Mammary epithelial cell (primary cell): ENCODE measurements at regions of chr7 and their contacts with region 1.

Region 1: DNA sequence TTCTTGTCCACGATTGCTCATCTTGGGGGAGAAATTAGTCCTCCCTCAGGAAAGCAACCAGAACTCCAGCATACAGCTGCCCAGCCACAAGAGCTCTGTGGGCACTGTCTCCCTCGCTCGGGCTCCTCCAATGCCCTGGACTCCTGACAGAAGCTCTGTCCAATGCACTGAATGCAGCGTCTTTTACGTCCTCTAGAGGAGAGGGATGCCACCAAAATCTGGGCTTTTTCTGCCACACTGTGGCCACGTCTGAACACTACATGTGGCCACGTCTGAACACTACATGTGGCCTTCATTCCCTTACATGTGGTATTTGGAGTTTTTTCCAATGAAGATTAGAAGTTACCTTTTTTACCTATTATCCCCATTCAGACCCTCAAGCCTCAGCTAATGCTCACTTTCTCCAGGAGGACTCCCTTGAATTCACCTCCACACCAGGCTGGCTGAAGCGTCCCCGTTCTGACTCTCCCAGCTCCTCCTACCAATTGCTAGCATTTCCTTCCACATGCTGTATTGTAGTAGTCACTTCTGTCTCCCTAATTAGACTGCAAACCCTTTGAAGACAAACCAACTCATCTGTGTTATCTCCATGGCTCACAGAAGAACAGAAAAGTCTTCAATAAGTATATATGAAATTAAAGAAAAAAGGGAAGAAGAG is 134.3 kb upstream of the PDE1C start:
- DNase-seq: peak; percentile 85
- H3K4me3 ChIP-seq: peak overlapping the region; percentile 30 to 40 (median 30)
- H3K27ac ChIP-seq: no peak overlapping the region
- H3K4me1 ChIP-seq: peaks cover 3% of the 10 kb centered on the region
- H3K27me3 ChIP-seq: no peaks in the 10 kb centered on the region
- CTCF ChIP-seq: peak; percentile 85 to 88

Region 2: GRCh38 chr7:31134246-31135188 is 1070.0 kb before region 1 on chr7:
- CTCF ChIA-PET with region 1: no interaction called
- dilution Hi-C with region 1: no loop called
- in situ Hi-C with region 1: no loop called
- intact Hi-C with region 1: loop called (anchors 1 kb)
- DNase-seq: peak; percentile 52
- H3K4me3 ChIP-seq: no peak overlapping the region
- H3K27ac ChIP-seq: no peak overlapping the region
- H3K4me1 ChIP-seq: no peaks in the 10 kb centered on the region
- H3K27me3 ChIP-seq: no peaks in the 10 kb centered on the region
- CTCF ChIP-seq: peak; percentile 68

Region 3: DNA sequence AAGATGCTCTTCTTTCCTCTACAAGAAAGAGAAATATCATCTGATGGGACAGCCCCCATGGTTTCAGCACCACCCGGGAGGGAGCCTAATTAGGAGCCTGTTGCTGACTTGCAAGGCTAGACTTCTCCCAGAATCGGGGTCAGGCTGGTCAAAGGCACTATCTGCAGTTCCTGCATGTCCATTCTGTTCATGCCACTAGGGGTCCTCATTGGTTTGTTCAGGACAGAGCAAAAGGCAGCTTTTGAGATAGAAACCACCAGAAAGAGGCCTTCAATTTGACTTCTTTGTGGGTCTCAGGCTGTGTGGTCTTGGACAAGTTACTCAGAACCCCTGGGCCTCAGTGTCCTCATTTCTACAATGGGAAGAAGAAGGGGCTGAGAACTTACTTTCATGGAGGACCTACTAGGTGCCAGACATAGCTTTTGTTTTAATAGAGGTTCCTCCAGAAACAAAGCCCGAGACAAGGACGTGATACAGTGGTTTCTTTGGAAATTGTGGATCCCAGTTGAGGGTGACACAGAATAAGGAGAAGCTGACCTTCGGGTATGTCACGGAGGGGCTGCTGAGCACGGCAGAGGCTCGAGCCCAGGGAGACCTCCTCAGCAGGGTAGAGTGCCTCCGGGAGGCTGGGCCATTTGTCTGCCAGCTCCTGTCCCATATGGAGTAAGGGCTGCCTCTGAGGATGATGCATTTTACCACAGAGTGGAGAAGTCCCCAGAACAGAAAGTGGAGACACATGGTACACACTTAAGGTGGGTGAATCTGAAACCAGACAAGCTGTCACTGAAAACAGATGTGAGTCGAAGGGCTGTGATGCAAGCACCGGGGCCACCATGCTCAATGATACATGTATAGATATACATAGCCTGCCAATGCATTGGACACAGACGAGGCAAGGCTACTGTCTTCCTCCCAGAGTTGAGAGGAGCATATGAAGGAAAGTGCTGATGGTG is 830.9 kb before region 1 on chr7:
- CTCF ChIA-PET with region 1: interaction called, 3 read pairs
- dilution Hi-C with region 1: no loop called
- in situ Hi-C with region 1: no loop called
- intact Hi-C with region 1: loop called (anchors 5 kb)
- DNase-seq: peak; percentile 47
- H3K4me3 ChIP-seq: no peak overlapping the region
- H3K27ac ChIP-seq: no peak overlapping the region
- H3K4me1 ChIP-seq: no peaks in the 10 kb centered on the region
- H3K27me3 ChIP-seq: peaks cover 2% of the 10 kb centered on the region
- CTCF ChIP-seq: peak; percentile 86 to 91

Region 4: DNA sequence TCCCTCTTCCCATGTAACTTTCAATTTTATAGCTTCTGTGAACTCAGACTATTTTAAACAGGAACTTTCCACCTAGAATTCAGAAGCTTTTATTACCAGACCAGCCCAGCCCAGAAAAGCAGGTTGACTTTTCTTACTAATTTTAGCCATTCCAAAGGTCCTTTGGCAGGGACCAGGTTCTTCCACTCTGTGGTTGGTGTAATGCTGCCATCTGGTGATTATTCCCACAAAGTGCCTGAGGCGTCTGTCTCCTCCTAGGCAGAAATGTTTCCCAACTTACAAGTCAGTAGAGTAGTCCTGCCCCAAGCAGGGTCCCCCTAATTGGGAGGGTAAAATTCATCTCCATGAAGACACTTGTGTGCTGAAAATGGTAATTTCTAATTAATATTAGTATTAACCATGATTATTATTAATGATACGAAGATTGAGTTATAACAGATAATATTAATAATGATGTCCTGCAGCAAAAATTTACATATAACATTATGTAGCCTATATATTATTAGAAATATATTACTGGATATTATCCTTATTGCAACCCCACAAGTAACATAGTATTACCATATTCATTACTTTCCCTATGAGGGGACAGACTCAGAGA is 570.5 kb before region 1 on chr7:
- CTCF ChIA-PET with region 1: no interaction called
- dilution Hi-C with region 1: no loop called
- in situ Hi-C with region 1: no loop called
- intact Hi-C with region 1: loop called (anchors 5 kb)
- DNase-seq: peak; percentile 48
- H3K4me3 ChIP-seq: no peak overlapping the region
- H3K27ac ChIP-seq: no peak overlapping the region
- H3K4me1 ChIP-seq: no peaks in the 10 kb centered on the region
- H3K27me3 ChIP-seq: no peaks in the 10 kb centered on the region
- CTCF ChIP-seq: peak; percentile 59 to 72

Region 5: GRCh38 chr7:31744294-31744874 is 460.1 kb before region 1 on chr7:
- CTCF ChIA-PET with region 1: interaction called, 18 read pairs
- dilution Hi-C with region 1: loop called (anchors 5 kb)
- in situ Hi-C with region 1: loop called (anchors 5 kb)
- intact Hi-C with region 1: loop called (anchors 1 kb)
- DNase-seq: peak; percentile 64
- H3K4me3 ChIP-seq: no peak overlapping the region
- H3K27ac ChIP-seq: no peak overlapping the region
- H3K4me1 ChIP-seq: peaks cover 9% of the 10 kb centered on the region
- H3K27me3 ChIP-seq: no peaks in the 10 kb centered on the region
- CTCF ChIP-seq: peak; percentile 87 to 94

Region 6: DNA sequence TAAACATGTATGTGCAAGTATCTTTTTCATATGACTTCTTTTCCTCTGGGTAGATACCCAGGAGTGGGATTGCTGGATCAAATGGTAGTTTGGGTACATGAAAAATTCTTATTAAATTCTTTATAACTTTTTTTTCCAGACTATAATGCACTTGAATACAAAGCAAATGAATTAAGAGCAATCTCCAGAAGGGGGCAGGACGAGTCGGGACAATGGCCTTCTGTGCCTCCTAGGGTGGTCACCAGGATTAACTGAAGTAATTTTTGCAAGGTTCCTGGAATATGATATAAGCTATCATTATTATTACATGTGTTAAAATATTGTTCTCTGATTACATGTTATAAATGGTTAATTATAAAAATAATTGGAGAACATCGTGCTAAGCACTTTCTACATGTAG is 390.3 kb before region 1 on chr7:
- CTCF ChIA-PET with region 1: interaction called, 4 read pairs
- dilution Hi-C with region 1: no loop called
- in situ Hi-C with region 1: no loop called
- intact Hi-C with region 1: loop called (anchors 1 kb)
- DNase-seq: no peak
- H3K4me3 ChIP-seq: no peak overlapping the region
- H3K27ac ChIP-seq: no peak overlapping the region
- H3K4me1 ChIP-seq: no peaks in the 10 kb centered on the region
- H3K27me3 ChIP-seq: no peaks in the 10 kb centered on the region
- CTCF ChIP-seq: peak in 1 of 2 donors; percentile 30

Region 7: DNA sequence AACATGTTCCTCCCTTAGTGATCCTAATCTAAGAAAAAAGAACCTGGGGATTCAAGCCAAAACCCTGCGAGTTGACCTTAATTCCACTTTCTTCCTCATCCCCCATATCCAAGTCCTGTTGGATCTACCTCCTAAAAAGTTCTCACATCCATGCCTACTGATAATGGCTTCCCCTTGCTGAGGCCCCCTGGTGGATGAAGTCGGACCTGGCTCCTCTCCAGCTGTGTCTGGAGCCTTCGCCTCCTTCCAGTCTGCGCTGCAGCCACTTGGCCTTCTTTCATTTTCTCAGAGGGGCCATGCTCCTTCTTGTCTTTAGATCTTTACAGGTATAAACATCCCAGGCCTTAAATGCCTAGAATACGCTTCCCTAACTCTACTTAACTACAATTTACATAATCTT is 142.3 kb before region 1 on chr7:
- CTCF ChIA-PET with region 1: interaction called, 3 read pairs
- dilution Hi-C with region 1: no loop called
- in situ Hi-C with region 1: no loop called
- intact Hi-C with region 1: loop called (anchors 1 kb)
- DNase-seq: peak; percentile 64
- H3K4me3 ChIP-seq: peak overlapping the region in 2 of 3 experiments; percentile 21 to 26
- H3K27ac ChIP-seq: no peak overlapping the region
- H3K4me1 ChIP-seq: peaks cover 26% of the 10 kb centered on the region
- H3K27me3 ChIP-seq: no peaks in the 10 kb centered on the region
- CTCF ChIP-seq: peak; percentile 73 to 79

Region 8: DNA sequence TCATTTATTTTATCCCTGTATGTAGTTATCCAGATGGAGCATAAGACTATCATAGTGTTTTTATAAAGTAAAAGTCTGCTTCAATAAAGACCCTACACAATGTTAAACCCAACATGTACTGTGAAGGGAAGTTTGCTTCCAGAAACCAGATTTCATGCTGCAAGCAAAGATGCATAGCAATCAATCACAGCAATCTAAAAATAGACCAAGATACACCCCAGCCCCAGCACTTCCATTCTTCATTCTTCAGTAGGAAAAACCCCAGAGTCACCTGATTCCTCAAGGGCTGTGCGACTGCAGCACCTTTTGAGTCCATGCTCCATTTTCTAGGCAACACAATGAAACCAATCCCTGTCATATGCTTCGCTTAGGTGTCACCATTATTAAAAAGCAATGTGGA is 67.4 kb before region 1 on chr7:
- CTCF ChIA-PET with region 1: no interaction called
- dilution Hi-C with region 1: no loop called
- in situ Hi-C with region 1: no loop called
- intact Hi-C with region 1: no loop called
- DNase-seq: no peak
- H3K4me3 ChIP-seq: no peak overlapping the region
- H3K27ac ChIP-seq: no peak overlapping the region
- H3K4me1 ChIP-seq: no peaks in the 10 kb centered on the region
- H3K27me3 ChIP-seq: no peaks in the 10 kb centered on the region
- CTCF ChIP-seq: no peak

Region 9: GRCh38 chr7:32266932-32267475 is 62.5 kb after region 1 on chr7:
- CTCF ChIA-PET with region 1: no interaction called
- dilution Hi-C with region 1: no loop called
- in situ Hi-C with region 1: no loop called
- intact Hi-C with region 1: no loop called
- DNase-seq: no peak
- H3K4me3 ChIP-seq: no peak overlapping the region
- H3K27ac ChIP-seq: no peak overlapping the region
- H3K4me1 ChIP-seq: no peaks in the 10 kb centered on the region
- H3K27me3 ChIP-seq: no peaks in the 10 kb centered on the region
- CTCF ChIP-seq: no peak